ENCODE measurements at regions of chr10 and their contacts with region 1.

Region 1: GRCh38 chr10:91797874-91798648 is at the start of gene TNKS2:
- DNase-seq: peak; percentile 94
- H3K4me3 Mint-ChIP-seq: peak within 1 kb of the TSS; percentile 98
- H3K27ac Mint-ChIP-seq: peak within 1 kb of the TSS; percentile 99
- H3K4me1 Mint-ChIP-seq: peaks cover 47% of the 10 kb centered on the region
- H3K27me3 Mint-ChIP-seq: no peaks in the 10 kb centered on the region
- total RNA-seq, gene TNKS2: 39.3 to 40.0 TPM

Region 2: GRCh38 chr10:91198781-91199180 is 599.3 kb before region 1 on chr10:
- CTCF ChIA-PET with region 1: no interaction called
- intact Hi-C with region 1: loop called (anchors 2 kb)
- DNase-seq: peak; percentile 37
- H3K4me3 Mint-ChIP-seq: no peak overlapping the region
- H3K27ac Mint-ChIP-seq: peak overlapping the region; percentile 13
- H3K4me1 Mint-ChIP-seq: peaks cover 77% of the 10 kb centered on the region
- H3K27me3 Mint-ChIP-seq: no peaks in the 10 kb centered on the region

Region 3: DNA sequence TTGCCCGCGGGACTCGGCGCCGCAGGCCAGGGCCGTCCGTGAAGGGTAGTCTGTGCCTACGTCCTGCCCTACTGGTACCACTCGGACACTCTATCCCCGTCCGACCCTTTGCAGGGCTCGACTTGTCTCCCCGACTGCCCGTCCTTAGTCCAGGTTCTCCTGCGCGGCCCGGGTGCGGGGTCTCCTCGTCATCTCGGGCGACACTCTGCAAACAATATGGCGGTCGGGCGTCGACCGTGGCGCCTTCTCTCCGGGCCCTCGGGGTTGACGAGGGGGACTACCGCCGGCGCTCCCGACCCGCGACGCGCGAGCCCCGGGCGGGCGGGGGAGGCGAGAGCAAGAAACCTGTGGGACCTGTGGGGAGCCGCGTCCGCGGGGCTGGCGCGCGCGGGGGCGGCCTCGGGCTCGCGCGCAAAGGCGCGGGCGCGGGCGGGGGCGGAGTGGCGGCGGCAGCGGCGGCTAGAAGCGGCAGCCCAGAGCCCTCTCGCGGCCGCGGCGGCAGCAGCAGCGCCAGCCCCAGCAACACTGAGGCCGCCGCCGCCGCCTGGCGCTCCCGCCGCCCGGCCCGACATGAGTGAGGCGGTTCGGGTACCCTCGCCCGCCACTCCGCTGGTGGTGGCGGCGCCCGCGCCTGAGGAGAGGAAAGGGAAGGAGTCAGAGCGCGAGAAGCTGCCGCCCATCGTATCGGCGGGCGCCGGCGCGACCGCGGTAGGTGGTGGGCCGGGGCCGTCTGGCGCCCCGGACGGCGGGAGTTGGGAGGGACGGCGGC is 388.0 kb before region 1 on chr10 and contains the start of gene HECTD2:
- CTCF ChIA-PET with region 1: no interaction called
- intact Hi-C with region 1: loop called (anchors 1 kb)
- DNase-seq: peak; percentile 77
- H3K4me3 Mint-ChIP-seq: peak within 1 kb of the TSS; percentile 83
- H3K27ac Mint-ChIP-seq: peak within 1 kb of the TSS; percentile 88
- H3K4me1 Mint-ChIP-seq: peaks cover 15% of the 10 kb centered on the region
- H3K27me3 Mint-ChIP-seq: peaks cover 12% of the 10 kb centered on the region
- total RNA-seq, gene HECTD2: 2.3 to 3.1 TPM

Region 4: GRCh38 chr10:91813251-91813650 is 15.2 kb after region 1 on chr10:
- CTCF ChIA-PET with region 1: no interaction called
- intact Hi-C with region 1: no loop called
- DNase-seq: no peak
- H3K4me3 Mint-ChIP-seq: no peak overlapping the region
- H3K27ac Mint-ChIP-seq: no peak overlapping the region
- H3K4me1 Mint-ChIP-seq: peaks cover 20% of the 10 kb centered on the region
- H3K27me3 Mint-ChIP-seq: no peaks in the 10 kb centered on the region

Region 5: GRCh38 chr10:91838199-91838598 is 40.1 kb after region 1 on chr10:
- CTCF ChIA-PET with region 1: no interaction called
- intact Hi-C with region 1: no loop called
- DNase-seq: no peak
- H3K4me3 Mint-ChIP-seq: no peak overlapping the region
- H3K27ac Mint-ChIP-seq: no peak overlapping the region
- H3K4me1 Mint-ChIP-seq: no peaks in the 10 kb centered on the region
- H3K27me3 Mint-ChIP-seq: no peaks in the 10 kb centered on the region

Region 6: GRCh38 chr10:91908337-91909116 is 110.5 kb after region 1 on chr10:
- CTCF ChIA-PET with region 1: interaction called, 7 read pairs
- intact Hi-C with region 1: loop called (anchors 1 kb)
- DNase-seq: peak; percentile 77
- H3K4me3 Mint-ChIP-seq: peak overlapping the region; percentile 90
- H3K27ac Mint-ChIP-seq: peak overlapping the region; percentile 74
- H3K4me1 Mint-ChIP-seq: peaks cover 20% of the 10 kb centered on the region
- H3K27me3 Mint-ChIP-seq: peaks cover 7% of the 10 kb centered on the region

Region 7: GRCh38 chr10:91974960-91975359 is 176.9 kb after region 1 on chr10:
- CTCF ChIA-PET with region 1: no interaction called
- intact Hi-C with region 1: loop called (anchors 1 kb)
- DNase-seq: no peak
- H3K4me3 Mint-ChIP-seq: no peak overlapping the region
- H3K27ac Mint-ChIP-seq: peak overlapping the region; percentile 73
- H3K4me1 Mint-ChIP-seq: peaks cover 37% of the 10 kb centered on the region
- H3K27me3 Mint-ChIP-seq: no peaks in the 10 kb centered on the region

Region 8: GRCh38 chr10:92573798-92574547 is 775.9 kb after region 1 on chr10 and contains the start of gene IDE:
- CTCF ChIA-PET with region 1: no interaction called
- intact Hi-C with region 1: loop called (anchors 5 kb)
- DNase-seq: peak; percentile 88
- H3K4me3 Mint-ChIP-seq: peak within 1 kb of the TSS; percentile 81
- H3K27ac Mint-ChIP-seq: peak within 1 kb of the TSS; percentile 85
- H3K4me1 Mint-ChIP-seq: peaks cover 34% of the 10 kb centered on the region
- H3K27me3 Mint-ChIP-seq: no peaks in the 10 kb centered on the region
- total RNA-seq, gene IDE: 30.8 to 31.2 TPM

Measured in activated naive CD4-positive, alpha-beta T cell treated with anti-CD3 and anti-CD28 coated beads for 36 hours (primary cell).